Activated CD4-positive, alpha-beta memory T cell treated with anti-CD3 and anti-CD28 coated beads for 36 hours (primary cell): ENCODE measurements at regions of chr15 and their contacts with region 1.

Region 1: GRCh38 chr15:99704444-99704838 is 28.8 kb downstream of the LYSMD4 start:
- DNase-seq: no peak
- H3K4me3 Mint-ChIP-seq: no peak overlapping the region
- H3K27ac Mint-ChIP-seq: no peak overlapping the region
- H3K4me1 Mint-ChIP-seq: peaks cover 40% of the 10 kb centered on the region
- H3K27me3 Mint-ChIP-seq: no peaks in the 10 kb centered on the region

Region 2: DNA sequence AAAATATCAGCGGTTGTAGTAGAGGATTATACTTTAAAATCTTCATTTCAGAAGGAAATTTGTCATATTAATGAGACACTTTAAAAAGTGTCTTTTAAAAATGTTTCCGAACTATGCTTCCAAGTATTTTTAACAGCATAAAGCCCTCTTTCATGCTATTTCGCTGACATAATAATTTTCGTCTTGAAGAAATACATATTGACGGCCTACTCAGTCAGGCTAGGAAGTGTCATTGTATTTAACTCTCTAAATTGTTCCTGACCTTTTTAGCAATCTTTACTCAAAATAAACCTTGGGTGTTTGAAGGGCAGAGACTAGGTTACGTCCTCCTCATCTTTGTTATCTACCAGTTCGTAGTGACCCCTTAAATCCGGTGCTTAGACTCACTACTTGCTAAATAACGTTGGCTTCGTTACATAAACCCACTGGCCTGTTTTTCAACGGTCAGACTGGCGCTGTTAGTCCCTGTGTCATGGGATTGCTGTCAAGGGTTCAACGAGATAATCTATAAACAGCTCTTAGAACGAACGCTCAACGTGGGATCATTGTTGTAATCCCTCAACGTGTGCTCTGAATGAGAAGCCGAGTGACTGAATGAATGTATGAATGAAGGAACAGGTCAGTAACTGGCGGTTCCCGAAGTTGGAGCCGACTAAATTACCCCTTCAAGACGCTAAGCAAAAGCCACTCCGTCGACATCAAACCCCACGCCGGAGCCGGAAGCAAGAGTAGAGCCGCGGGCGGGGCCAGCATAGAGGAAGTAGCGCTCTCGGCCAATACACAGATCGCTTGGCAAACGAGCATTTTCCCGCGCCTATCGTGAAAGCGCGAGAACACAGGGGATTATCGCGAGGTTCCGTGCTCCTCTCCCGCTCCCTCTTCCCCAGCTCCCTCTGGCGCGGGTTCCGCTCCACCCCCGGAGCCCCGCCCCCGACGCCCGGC is 453.7 kb before region 1 on chr15:
- CTCF ChIA-PET with region 1: interaction called, 11 read pairs
- POLR2A ChIA-PET with region 1: no interaction called
- intact Hi-C with region 1: no loop called
- DNase-seq: peak; percentile 99
- H3K4me3 Mint-ChIP-seq: peak overlapping the region; percentile 88
- H3K27ac Mint-ChIP-seq: peak overlapping the region; percentile 84
- H3K4me1 Mint-ChIP-seq: peaks cover 28% of the 10 kb centered on the region
- H3K27me3 Mint-ChIP-seq: no peaks in the 10 kb centered on the region

Region 3: DNA sequence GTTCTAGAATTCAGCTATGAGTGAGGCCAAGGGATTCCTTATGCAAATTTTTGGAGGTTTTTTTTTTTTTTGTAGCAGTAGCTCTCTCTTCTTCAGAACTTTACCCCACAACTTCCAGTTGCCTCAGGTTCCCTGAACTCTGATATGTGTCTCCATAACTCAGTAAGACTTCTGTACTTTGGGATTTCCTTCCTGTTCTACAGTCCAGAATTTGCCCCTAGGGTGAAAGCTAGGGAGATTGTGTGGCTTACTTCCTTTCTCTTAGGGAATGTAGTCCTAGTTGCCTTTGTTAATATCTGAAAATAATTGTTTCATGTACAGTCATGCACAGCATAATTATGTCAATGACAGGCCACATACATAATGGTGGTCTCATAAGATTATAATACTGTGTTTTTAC is 422.3 kb before region 1 on chr15:
- CTCF ChIA-PET with region 1: interaction called, 25 read pairs
- POLR2A ChIA-PET with region 1: interaction called, 4 read pairs
- intact Hi-C with region 1: loop called (anchors 1 kb)
- DNase-seq: no peak
- H3K4me3 Mint-ChIP-seq: no peak overlapping the region
- H3K27ac Mint-ChIP-seq: no peak overlapping the region
- H3K4me1 Mint-ChIP-seq: peaks cover 40% of the 10 kb centered on the region
- H3K27me3 Mint-ChIP-seq: no peaks in the 10 kb centered on the region

Region 4: GRCh38 chr15:99305761-99306505 is 398.5 kb before region 1 on chr15:
- CTCF ChIA-PET with region 1: no interaction called
- POLR2A ChIA-PET with region 1: no interaction called
- intact Hi-C with region 1: no loop called
- DNase-seq: no peak
- H3K4me3 Mint-ChIP-seq: no peak overlapping the region
- H3K27ac Mint-ChIP-seq: no peak overlapping the region
- H3K4me1 Mint-ChIP-seq: no peaks in the 10 kb centered on the region
- H3K27me3 Mint-ChIP-seq: no peaks in the 10 kb centered on the region

Region 5: GRCh38 chr15:99343881-99344551 is 360.4 kb before region 1 on chr15:
- CTCF ChIA-PET with region 1: interaction called, 22 read pairs
- POLR2A ChIA-PET with region 1: no interaction called
- intact Hi-C with region 1: loop called (anchors 5 kb)
- DNase-seq: peak; percentile 47
- H3K4me3 Mint-ChIP-seq: no peak overlapping the region
- H3K27ac Mint-ChIP-seq: no peak overlapping the region
- H3K4me1 Mint-ChIP-seq: peaks cover 12% of the 10 kb centered on the region
- H3K27me3 Mint-ChIP-seq: no peaks in the 10 kb centered on the region

Region 6: GRCh38 chr15:99507504-99508310 is 196.7 kb before region 1 on chr15:
- CTCF ChIA-PET with region 1: interaction called, 5 read pairs
- POLR2A ChIA-PET with region 1: no interaction called
- intact Hi-C with region 1: loop called (anchors 5 kb)
- DNase-seq: no peak
- H3K4me3 Mint-ChIP-seq: no peak overlapping the region
- H3K27ac Mint-ChIP-seq: no peak overlapping the region
- H3K4me1 Mint-ChIP-seq: peaks cover 24% of the 10 kb centered on the region
- H3K27me3 Mint-ChIP-seq: no peaks in the 10 kb centered on the region

Region 7: GRCh38 chr15:99719096-99719541 is 14.7 kb after region 1 on chr15:
- CTCF ChIA-PET with region 1: interaction called, 44 read pairs
- POLR2A ChIA-PET with region 1: no interaction called
- intact Hi-C with region 1: loop called (anchors 1 kb)
- DNase-seq: no peak
- H3K4me3 Mint-ChIP-seq: no peak overlapping the region
- H3K27ac Mint-ChIP-seq: no peak overlapping the region
- H3K4me1 Mint-ChIP-seq: peaks cover 40% of the 10 kb centered on the region
- H3K27me3 Mint-ChIP-seq: no peaks in the 10 kb centered on the region